HCT116 (cell line): ENCODE measurements at regions of chr12 and their contacts with region 1.

Region 1: GRCh38 chr12:6688999-6689882 is at the start of gene ZNF384:
- DNase-seq: peak; percentile 98
- ATAC-seq: peak; percentile 85
- H3K4me3 ChIP-seq: peak within 1 kb of the TSS; percentile 74 to 90
- H3K27ac ChIP-seq: peak within 1 kb of the TSS; percentile 99
- H3K4me1 ChIP-seq: peaks cover 9 to 21% of the 10 kb centered on the region in 2 experiments
- H3K27me3 ChIP-seq: no peaks in the 10 kb centered on the region
- CTCF ChIP-seq: peak in 1 of 3 experiments; percentile 13; a peak in 1 of 6 replicates
- POLR2A ChIP-seq: peak; percentile 62
- RAD21 ChIP-seq: no peak
- total RNA-seq, gene ZNF384: 73.4 TPM

Region 2: GRCh38 chr12:6526766-6527525 is 162.3 kb before region 1 on chr12:
- CTCF ChIA-PET with region 1: no interaction called
- POLR2A ChIA-PET with region 1: no interaction called
- RAD21 ChIA-PET with region 1: no interaction called
- intact Hi-C with region 1: no loop called
- DNase-seq: no peak
- ATAC-seq: no peak
- H3K4me3 ChIP-seq: no peak overlapping the region
- H3K27ac ChIP-seq: no peak overlapping the region
- H3K4me1 ChIP-seq: peaks cover 5 to 10% of the 10 kb centered on the region in 2 experiments
- H3K27me3 ChIP-seq: no peaks in the 10 kb centered on the region
- CTCF ChIP-seq: no peak
- POLR2A ChIP-seq: no peak
- RAD21 ChIP-seq: no peak

Region 3: DNA sequence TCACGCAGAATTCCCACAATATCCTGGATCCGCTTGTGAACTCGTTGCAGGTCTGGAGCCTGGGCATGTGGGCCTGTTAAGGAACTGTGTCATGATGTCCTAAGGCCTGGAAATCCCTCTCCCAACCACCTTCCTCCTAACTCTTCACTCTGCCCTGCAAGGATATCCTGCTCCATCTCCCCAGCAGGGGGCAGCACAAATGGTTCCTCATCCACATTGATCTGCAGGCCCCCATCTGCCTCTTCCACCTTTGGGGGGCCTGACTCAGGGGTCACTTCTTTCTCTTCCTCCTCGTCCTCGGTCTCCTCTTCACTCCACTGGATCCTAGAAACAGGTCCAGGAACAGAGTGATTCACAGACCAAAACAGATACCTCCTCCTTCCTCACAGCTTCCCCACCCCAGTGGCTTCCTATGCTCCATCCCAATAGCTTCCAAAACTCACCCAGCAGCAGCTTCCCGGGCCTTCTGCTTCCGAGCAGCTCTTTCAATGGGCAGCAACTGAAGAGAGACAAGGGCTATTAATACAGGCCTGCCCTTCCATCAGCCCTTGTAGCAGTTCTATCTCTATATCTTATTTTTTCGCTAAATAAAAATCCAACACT is 125.7 kb before region 1 on chr12:
- CTCF ChIA-PET with region 1: interaction called, 8 read pairs
- POLR2A ChIA-PET with region 1: interaction called, 4 read pairs
- RAD21 ChIA-PET with region 1: interaction called in 1 of 2 experiments, 3 read pairs
- intact Hi-C with region 1: loop called (anchors 1 kb)
- DNase-seq: no peak
- ATAC-seq: peak; percentile 57
- H3K4me3 ChIP-seq: no peak overlapping the region
- H3K27ac ChIP-seq: no peak overlapping the region
- H3K4me1 ChIP-seq: peaks cover 0 to 10% of the 10 kb centered on the region in 2 experiments; a peak in 2 of 4 replicates
- H3K27me3 ChIP-seq: no peaks in the 10 kb centered on the region
- CTCF ChIP-seq: peak; percentile 55 to 89 (median 82); a peak in 5 of 6 replicates
- POLR2A ChIP-seq: no peak
- RAD21 ChIP-seq: peak; percentile 41

Region 4: GRCh38 chr12:6613776-6614512 is 75.3 kb before region 1 on chr12:
- CTCF ChIA-PET with region 1: interaction called, 14 read pairs
- POLR2A ChIA-PET with region 1: interaction called, 13 read pairs
- RAD21 ChIA-PET with region 1: interaction called, 3 to 8 read pairs
- intact Hi-C with region 1: loop called (anchors 1 kb)
- DNase-seq: peak; percentile 95
- ATAC-seq: peak; percentile 74
- H3K4me3 ChIP-seq: no peak overlapping the region; a peak in 1 of 4 replicates
- H3K27ac ChIP-seq: peak overlapping the region; percentile 97
- H3K4me1 ChIP-seq: peaks cover 38 to 45% of the 10 kb centered on the region in 2 experiments
- H3K27me3 ChIP-seq: no peaks in the 10 kb centered on the region
- CTCF ChIP-seq: peak in 2 of 3 experiments; percentile 27 to 34; a peak in 3 of 6 replicates
- POLR2A ChIP-seq: no peak
- RAD21 ChIP-seq: no peak

Region 5: DNA sequence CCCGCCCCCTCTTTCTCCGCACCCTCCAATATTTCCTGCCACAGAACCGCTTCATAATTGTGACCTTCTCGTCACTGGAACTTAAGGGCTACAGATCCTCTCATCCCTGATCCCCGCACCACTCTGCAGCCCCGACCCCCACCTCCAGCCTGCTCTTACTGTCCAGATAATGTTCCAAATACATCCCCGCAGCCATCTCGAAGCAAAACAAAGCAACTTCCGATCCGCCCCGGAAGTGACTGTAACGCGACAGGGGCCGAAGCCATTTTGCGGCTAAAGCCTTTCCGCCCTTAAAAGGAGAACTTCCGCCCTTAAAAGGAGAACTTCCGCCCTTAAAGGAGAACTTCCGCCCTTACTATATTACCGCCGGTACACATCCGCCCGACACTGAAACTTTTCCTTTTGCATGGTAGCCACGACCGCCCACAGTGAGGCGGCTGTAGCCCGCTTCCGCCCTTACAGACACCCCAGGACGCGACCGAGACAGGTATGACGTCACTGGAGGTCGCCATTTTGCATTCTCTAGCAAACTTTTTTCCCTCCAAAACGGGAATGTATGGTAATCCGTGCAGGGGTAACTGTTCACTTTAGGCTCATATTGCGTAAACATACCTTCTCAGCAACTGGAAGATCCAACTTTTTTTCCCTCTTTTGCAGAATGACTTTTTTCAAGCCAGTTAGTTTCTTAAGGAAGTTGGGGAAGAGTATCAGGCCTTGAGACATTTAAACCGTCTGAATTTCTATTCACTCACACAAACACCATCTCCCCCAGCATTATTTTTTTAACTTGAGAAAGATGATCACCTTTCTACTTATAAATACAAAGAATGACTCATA is 26.1 kb before region 1 on chr12 and contains the start of gene ING4:
- CTCF ChIA-PET with region 1: interaction called, 11 read pairs
- POLR2A ChIA-PET with region 1: no interaction called
- RAD21 ChIA-PET with region 1: no interaction called
- intact Hi-C with region 1: loop called (anchors 2 kb)
- DNase-seq: peak; percentile 99
- ATAC-seq: peak; percentile 98
- H3K4me3 ChIP-seq: peak within 1 kb of the TSS; percentile 68 to 91
- H3K27ac ChIP-seq: peak within 1 kb of the TSS; percentile 67
- H3K4me1 ChIP-seq: peaks cover 10 to 14% of the 10 kb centered on the region in 2 experiments; a peak in 3 of 4 replicates
- H3K27me3 ChIP-seq: no peaks in the 10 kb centered on the region
- CTCF ChIP-seq: no peak
- POLR2A ChIP-seq: no peak
- RAD21 ChIP-seq: no peak
- total RNA-seq, gene ING4: 17.9 TPM

Region 6: GRCh38 chr12:6723607-6724396 is 34.6 kb after region 1 on chr12 and contains the start of gene COPS7A:
- CTCF ChIA-PET with region 1: interaction called, 5 read pairs
- POLR2A ChIA-PET with region 1: interaction called, 28 read pairs
- RAD21 ChIA-PET with region 1: interaction called, 5 to 6 read pairs
- intact Hi-C with region 1: loop called (anchors 1 kb)
- DNase-seq: peak; percentile 98
- ATAC-seq: peak; percentile 96
- H3K4me3 ChIP-seq: peak within 1 kb of the TSS; percentile 54 to 86
- H3K27ac ChIP-seq: peak within 1 kb of the TSS; percentile 91
- H3K4me1 ChIP-seq: peaks cover 5 to 26% of the 10 kb centered on the region in 2 experiments; a peak in 3 of 4 replicates
- H3K27me3 ChIP-seq: no peaks in the 10 kb centered on the region
- CTCF ChIP-seq: no peak
- POLR2A ChIP-seq: peak; percentile 29
- RAD21 ChIP-seq: no peak
- total RNA-seq, gene COPS7A: 67.8 TPM

Region 7: DNA sequence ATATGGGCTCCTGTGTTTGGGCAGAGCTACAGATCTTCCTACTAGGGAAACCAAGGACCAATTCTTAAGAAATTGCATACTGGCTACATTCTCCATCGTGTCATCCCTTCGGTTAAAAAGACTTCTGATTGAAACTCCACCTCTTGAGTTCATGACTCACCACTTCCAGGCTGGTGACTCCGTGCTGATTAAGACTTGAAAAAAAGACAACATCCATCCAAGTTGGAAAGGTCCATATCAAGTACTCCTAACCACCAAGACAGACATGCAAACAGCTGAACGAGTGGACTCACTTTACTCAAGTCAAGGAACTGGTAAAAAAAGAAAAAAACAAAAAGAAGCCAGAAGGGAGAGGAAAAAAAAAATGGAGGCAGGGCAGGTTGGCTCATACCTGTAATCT is 913.0 kb after region 1 on chr12:
- CTCF ChIA-PET with region 1: no interaction called
- POLR2A ChIA-PET with region 1: no interaction called
- RAD21 ChIA-PET with region 1: no interaction called
- intact Hi-C with region 1: no loop called
- DNase-seq: peak; percentile 22
- ATAC-seq: peak; percentile 46; the same call in 1 of the 2 replicates
- H3K4me3 ChIP-seq: no peak overlapping the region
- H3K27ac ChIP-seq: no peak overlapping the region
- H3K4me1 ChIP-seq: peaks cover 0 to 13% of the 10 kb centered on the region in 2 experiments; a peak in 2 of 4 replicates
- H3K27me3 ChIP-seq: no peaks in the 10 kb centered on the region
- CTCF ChIP-seq: no peak
- POLR2A ChIP-seq: no peak
- RAD21 ChIP-seq: no peak